Activated naive CD8-positive, alpha-beta T cell treated with anti-CD3 and anti-CD28 coated beads, Interleukin-2, amount 10 ng/mL, durations not matched to agents 7 days and 5 days (primary cell): ENCODE measurements at regions of chr5 and their contacts with region 1.

Region 1: DNA sequence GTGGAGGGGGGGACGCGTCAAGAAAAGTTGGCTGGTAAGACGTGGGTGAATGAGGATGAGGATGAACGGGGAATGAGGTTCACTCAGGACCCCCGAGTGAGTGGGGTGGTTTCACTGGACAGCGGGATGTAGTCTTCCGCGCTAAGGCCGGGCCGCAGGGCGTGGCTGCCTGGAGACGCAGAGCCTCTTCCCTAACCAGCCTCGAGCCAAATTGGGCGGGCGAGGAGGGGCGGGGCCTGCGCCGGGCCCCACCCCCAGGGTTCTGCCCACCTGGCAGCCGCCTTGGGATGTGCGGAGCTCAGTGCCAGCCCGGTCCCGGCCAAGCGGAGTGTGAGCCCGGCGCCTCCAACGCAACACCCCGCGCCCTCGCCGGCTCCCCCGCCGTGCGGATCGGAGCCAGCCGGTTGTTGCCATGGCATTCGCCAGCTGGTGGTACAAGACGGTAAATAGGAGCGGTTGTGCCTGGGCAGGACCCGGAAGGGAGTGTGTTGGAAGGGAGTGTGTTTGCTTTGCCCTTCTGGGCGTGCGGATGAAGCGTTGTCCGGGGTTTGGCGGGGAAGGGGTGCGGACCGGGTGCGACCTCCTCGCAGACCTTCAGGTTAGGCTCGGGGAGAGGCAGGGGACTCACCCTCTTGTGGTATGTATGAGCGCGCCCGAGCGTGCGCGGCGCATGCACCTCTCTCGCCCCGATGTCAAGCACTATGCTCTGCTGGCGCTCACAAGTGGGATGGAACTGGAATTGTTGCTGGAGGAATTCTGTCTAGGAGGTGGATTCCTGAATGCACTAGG is 743 bp downstream of the CAST start:
- DNase-seq: peak; percentile 92
- ATAC-seq: peak; percentile 73
- H3K4me3 Mint-ChIP-seq: peak overlapping the region; percentile 99
- H3K27ac Mint-ChIP-seq: peak overlapping the region; percentile 98
- H3K4me1 Mint-ChIP-seq: peaks cover 31% of the 10 kb centered on the region
- H3K27me3 Mint-ChIP-seq: peaks cover 10% of the 10 kb centered on the region

Region 2: GRCh38 chr5:96702503-96703383 is 39.8 kb after region 1 on chr5:
- POLR2A ChIA-PET with region 1: interaction called, 26 read pairs
- DNase-seq: peak; percentile 72
- ATAC-seq: peak; percentile 82
- H3K4me3 Mint-ChIP-seq: peak overlapping the region; percentile 93
- H3K27ac Mint-ChIP-seq: peak overlapping the region; percentile 91
- H3K4me1 Mint-ChIP-seq: peaks cover 23% of the 10 kb centered on the region
- H3K27me3 Mint-ChIP-seq: no peaks in the 10 kb centered on the region

Region 3: DNA sequence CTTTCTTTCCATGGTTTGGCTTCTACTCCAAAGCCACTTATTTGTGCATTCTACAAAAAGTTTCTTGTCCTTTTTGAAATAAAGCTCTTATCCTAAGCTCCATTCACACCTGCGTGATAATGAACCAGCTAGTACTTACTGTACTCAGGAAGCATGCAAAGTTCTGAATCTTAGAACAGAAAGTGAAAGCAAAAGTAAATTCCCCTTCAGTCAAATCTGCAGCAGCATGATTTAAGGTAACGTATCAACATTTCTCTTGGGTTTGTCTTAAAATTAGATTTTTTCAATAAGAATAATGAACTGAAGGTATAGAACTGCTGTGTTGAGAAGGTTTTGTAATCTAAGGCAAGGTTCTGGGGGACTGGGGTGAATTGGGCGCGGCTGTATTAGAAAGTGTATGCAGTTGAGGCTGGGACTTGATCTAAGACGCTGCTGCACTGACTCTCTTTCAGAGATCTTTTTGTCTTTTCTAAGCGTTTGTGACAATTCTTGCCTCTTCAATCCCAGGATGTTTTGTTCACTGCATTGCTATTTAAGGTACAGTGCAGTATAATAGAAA is 213.5 kb after region 1 on chr5 and contains the start of gene ERAP2:
- POLR2A ChIA-PET with region 1: interaction called, 11 read pairs
- DNase-seq: no peak
- ATAC-seq: peak; percentile 69
- H3K4me3 Mint-ChIP-seq: peak within 1 kb of the TSS; percentile 92
- H3K27ac Mint-ChIP-seq: peak within 1 kb of the TSS; percentile 96
- H3K4me1 Mint-ChIP-seq: peaks cover 57% of the 10 kb centered on the region
- H3K27me3 Mint-ChIP-seq: no peaks in the 10 kb centered on the region
- total RNA-seq, gene ERAP2: 107 to 110 TPM